Left ventricle myocardium inferior (tissue), 1 donor: ENCODE measurements at regions of chr9 and their contacts with region 1.

Region 1: DNA sequence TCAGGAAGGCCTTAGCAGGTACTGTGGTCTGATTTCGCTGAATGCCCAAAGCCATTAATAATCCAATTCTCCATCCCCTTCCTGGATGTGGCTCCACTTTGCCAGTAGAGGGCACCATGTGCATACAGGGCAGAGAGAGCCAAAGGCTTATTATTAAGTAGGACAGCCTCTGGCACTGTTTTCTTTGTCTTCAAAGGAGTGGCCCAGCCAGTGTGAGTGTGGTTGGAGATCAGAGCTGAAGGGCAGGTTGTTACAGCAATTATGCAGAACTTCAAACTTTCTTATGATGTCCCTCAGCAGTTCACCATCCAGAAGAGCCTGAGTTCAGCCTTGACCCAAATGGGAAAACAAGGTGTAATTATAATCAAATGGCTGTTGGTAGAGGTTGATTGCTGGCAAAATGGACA is 38.6 kb upstream of the CEMIP2 start:
- DNase-seq: peak; percentile 36
- H3K4me3 ChIP-seq: no peak overlapping the region
- H3K27ac ChIP-seq: no peak overlapping the region
- H3K4me1 ChIP-seq: peaks cover 11% of the 10 kb centered on the region
- H3K27me3 ChIP-seq: no peaks in the 10 kb centered on the region
- CTCF ChIP-seq: peak; percentile 96

Region 2: GRCh38 chr9:72025931-72026342 is 219.0 kb after region 1 on chr9:
- intact Hi-C with region 1: loop called (anchors 2 kb)
- DNase-seq: no peak
- H3K4me3 ChIP-seq: no peak overlapping the region
- H3K27ac ChIP-seq: no peak overlapping the region
- H3K4me1 ChIP-seq: no peaks in the 10 kb centered on the region
- H3K27me3 ChIP-seq: no peaks in the 10 kb centered on the region
- CTCF ChIP-seq: no peak